A549 (cell line): ENCODE measurements at regions of chr10 and their contacts with region 1.

Region 1: GRCh38 chr10:103564776-103565520 is 71.4 kb downstream of the NEURL1 start:
- DNase-seq: peak; percentile 43 to 67
- ATAC-seq: peak; percentile 62 to 88; a peak in 5 of 6 replicates
- H3K4me3 ChIP-seq: no peak overlapping the region
- H3K27ac ChIP-seq: no peak overlapping the region
- H3K4me1 ChIP-seq: no peaks in the 10 kb centered on the region
- CTCF ChIP-seq: peak; percentile 56
- EP300 ChIP-seq: no peak
- POLR2A ChIP-seq: no peak
- RAD21 ChIP-seq: peak; percentile 32 to 64; a peak in 2 of 5 replicates

Region 2: DNA sequence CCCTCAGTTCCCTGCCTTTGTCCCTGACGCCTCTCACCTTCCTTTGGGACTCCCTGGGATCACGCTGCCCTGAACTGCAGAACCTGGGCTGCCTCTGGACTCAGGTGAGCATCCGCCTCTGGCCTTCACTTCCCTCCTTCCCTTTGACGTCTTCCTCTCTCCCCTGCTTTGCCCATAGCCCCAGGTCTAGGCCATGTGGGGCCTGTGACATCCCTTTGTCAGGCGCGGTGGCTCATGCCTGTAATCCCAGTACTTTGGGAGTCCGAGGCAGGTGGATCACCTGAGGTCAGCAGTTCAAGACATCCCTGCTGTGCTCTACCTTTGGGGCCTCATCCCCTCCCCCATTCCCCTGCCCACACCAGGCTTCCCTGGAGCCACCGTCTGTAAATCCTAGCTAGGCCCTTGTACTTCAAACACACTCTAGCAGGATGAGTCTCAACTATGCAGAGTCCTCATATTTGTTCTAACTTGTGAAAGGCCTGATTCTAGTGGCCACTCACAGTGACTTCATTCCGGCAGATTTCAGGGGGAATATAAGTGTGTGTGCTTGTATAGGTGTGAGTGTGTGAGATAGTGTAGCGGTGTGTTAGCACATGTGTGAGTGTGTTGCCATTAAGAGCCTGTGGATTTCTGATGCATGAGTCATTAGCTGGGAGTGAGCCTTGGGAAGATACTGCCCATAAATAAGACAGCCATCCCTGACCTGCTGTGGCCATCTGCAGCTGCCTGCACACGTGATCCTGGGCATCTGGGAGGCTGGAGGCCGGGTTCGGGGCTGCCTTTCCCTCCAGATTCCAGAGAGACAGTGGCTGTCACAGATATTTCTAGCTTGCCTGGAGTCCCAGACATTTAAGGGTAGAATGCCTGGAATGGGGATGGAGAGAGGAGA is 73.2 kb before region 1 on chr10:
- CTCF ChIA-PET with region 1: interaction called, 17 read pairs
- POLR2A ChIA-PET with region 1: no interaction called
- DNase-seq: peak; percentile 68 to 77
- ATAC-seq: peak; percentile 69 to 74
- H3K4me3 ChIP-seq: no peak overlapping the region
- H3K27ac ChIP-seq: no peak overlapping the region
- H3K4me1 ChIP-seq: peaks cover 13% of the 10 kb centered on the region
- CTCF ChIP-seq: no peak
- EP300 ChIP-seq: no peak
- POLR2A ChIP-seq: no peak
- RAD21 ChIP-seq: no peak

Region 3: GRCh38 chr10:103542764-103543616 is 22.0 kb before region 1 on chr10:
- CTCF ChIA-PET with region 1: interaction called, 34 read pairs
- POLR2A ChIA-PET with region 1: no interaction called
- DNase-seq: peak in 1 of 2 experiments; percentile 48
- ATAC-seq: peak; percentile 51 to 78; a peak in 4 of 6 replicates
- H3K4me3 ChIP-seq: no peak overlapping the region
- H3K27ac ChIP-seq: no peak overlapping the region
- H3K4me1 ChIP-seq: 0 out of 3 replicates have a peak, but pooled peaks cover 4% of the 10 kb centered on the region
- CTCF ChIP-seq: peak; percentile 39; the same call in 2 of the 3 replicates
- EP300 ChIP-seq: no peak
- POLR2A ChIP-seq: no peak
- RAD21 ChIP-seq: peak; percentile 12 to 42; a peak in 2 of 5 replicates

Region 4: DNA sequence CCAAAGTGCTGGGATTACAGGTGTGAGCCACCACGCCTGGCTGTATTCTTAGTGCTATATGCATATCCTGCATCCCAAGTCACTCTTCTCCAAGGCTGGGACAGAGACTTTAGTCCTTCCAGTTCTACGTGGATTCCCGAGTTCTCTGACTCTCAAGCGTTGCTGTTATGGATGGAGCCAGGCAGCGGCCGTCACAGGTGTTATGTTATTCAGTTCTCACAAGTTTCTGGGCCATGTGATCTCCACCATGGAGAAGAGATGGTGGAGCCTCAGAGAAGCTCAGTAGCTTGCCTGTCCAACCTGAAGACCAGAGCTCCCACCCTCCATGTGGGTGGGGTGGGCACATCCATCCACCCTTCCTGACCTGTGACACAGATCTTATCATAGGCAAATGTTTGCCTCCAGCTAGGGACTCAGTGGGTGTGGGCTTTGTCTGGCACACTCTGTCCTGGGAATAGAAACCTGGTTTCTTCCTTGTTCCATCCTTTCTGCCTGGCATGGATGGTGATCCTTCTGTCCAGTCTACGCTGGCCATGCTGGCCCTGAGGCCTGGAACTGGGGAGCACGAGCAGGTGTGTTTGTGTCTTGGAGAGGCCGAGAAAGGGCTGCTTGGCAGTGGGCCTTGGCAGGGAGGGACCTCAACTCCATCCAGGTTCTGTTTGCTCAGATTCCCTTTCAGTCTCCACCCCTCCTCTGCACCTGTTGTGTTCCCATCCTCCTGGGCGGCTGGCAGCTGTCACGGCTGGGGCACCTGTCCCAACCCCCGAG is 16.2 kb before region 1 on chr10:
- CTCF ChIA-PET with region 1: interaction called, 34 read pairs
- POLR2A ChIA-PET with region 1: no interaction called
- DNase-seq: no peak
- ATAC-seq: no peak
- H3K4me3 ChIP-seq: no peak overlapping the region
- H3K27ac ChIP-seq: no peak overlapping the region
- H3K4me1 ChIP-seq: no peaks in the 10 kb centered on the region
- CTCF ChIP-seq: no peak
- EP300 ChIP-seq: no peak
- POLR2A ChIP-seq: no peak
- RAD21 ChIP-seq: no peak

Region 5: DNA sequence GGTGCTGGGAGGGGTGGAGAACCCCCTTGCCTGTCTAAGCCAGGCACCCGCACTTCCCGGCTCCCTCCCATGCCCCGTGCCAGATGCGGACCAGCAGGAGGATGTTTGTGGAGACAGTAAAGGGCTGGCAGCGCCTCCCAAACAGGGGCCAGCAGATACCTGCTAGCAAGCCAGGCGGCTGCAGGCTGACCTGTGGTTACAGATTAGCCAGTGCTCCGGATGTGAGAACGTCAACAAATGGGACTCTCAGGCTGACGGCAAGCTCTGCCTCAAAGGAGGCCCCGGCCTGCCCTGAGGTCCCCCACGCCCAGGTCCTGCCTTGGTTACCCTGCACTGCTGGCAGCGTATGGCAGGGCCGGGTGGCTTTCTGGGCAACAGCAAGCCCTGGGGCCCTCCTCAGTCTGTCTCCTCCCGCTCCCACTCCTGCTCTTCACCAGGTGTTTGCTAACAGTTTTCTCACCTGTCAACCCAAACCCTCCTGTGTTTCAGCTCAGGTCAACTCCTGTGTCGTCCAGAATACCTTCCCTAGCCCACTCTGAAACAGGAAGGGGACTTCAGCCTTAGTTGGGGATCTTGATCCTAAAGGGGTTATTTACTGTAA is 13.9 kb after region 1 on chr10:
- CTCF ChIA-PET with region 1: interaction called, 32 read pairs
- POLR2A ChIA-PET with region 1: no interaction called
- DNase-seq: peak; percentile 33 to 39
- ATAC-seq: peak; percentile 37 to 50; a peak in 3 of 6 replicates
- H3K4me3 ChIP-seq: no peak overlapping the region
- H3K27ac ChIP-seq: peak overlapping the region in 1 of 2 experiments; percentile 52; a peak in 3 of 6 replicates
- H3K4me1 ChIP-seq: peaks cover 30% of the 10 kb centered on the region
- CTCF ChIP-seq: no peak
- EP300 ChIP-seq: no peak
- POLR2A ChIP-seq: no peak
- RAD21 ChIP-seq: no peak

Region 6: GRCh38 chr10:103584216-103585010 is 19.5 kb after region 1 on chr10:
- CTCF ChIA-PET with region 1: interaction called, 32 read pairs
- POLR2A ChIA-PET with region 1: no interaction called
- DNase-seq: no peak
- ATAC-seq: no peak
- H3K4me3 ChIP-seq: no peak overlapping the region
- H3K27ac ChIP-seq: no peak overlapping the region
- H3K4me1 ChIP-seq: no peaks in the 10 kb centered on the region
- CTCF ChIP-seq: no peak
- EP300 ChIP-seq: no peak
- POLR2A ChIP-seq: no peak
- RAD21 ChIP-seq: no peak

Region 7: DNA sequence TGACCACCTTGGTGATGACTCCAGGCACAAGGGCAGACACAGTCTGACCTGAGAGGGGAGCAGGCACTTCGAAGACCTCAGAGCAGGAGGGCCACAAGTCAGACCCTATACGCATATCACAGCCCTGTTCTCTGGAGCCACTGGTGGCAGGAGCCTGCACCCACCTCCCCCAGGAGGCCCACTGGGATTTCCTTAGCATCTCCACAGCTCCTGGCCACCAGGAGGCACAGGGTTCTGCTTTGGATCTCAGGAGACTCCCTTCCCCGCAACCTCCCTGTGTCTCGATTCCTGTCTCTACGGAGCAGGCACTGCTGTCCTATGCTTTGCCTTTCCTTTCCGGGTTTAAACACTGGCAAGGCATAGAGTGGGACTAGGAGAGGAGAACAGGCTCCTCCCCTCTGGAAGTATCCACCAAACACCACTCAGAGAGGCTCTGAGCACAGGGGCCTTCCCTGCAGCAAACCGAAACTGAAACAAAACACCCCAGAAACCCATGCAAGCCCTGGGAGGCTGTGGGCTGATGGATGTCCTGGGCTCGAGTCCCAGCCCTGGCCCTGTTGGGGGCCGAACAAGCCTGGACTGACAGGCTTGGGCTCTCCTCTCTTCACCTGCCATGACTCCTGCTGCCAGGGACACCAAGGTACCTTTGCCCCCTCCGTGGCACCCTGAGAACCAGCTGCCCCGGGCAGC is 94.9 kb after region 1 on chr10:
- CTCF ChIA-PET with region 1: no interaction called
- POLR2A ChIA-PET with region 1: no interaction called
- DNase-seq: no peak
- ATAC-seq: peak; percentile 25 to 30; a peak in 3 of 6 replicates
- H3K4me3 ChIP-seq: no peak overlapping the region
- H3K27ac ChIP-seq: no peak overlapping the region
- H3K4me1 ChIP-seq: no peaks in the 10 kb centered on the region
- CTCF ChIP-seq: no peak
- EP300 ChIP-seq: no peak
- POLR2A ChIP-seq: no peak
- RAD21 ChIP-seq: no peak

Region 8: DNA sequence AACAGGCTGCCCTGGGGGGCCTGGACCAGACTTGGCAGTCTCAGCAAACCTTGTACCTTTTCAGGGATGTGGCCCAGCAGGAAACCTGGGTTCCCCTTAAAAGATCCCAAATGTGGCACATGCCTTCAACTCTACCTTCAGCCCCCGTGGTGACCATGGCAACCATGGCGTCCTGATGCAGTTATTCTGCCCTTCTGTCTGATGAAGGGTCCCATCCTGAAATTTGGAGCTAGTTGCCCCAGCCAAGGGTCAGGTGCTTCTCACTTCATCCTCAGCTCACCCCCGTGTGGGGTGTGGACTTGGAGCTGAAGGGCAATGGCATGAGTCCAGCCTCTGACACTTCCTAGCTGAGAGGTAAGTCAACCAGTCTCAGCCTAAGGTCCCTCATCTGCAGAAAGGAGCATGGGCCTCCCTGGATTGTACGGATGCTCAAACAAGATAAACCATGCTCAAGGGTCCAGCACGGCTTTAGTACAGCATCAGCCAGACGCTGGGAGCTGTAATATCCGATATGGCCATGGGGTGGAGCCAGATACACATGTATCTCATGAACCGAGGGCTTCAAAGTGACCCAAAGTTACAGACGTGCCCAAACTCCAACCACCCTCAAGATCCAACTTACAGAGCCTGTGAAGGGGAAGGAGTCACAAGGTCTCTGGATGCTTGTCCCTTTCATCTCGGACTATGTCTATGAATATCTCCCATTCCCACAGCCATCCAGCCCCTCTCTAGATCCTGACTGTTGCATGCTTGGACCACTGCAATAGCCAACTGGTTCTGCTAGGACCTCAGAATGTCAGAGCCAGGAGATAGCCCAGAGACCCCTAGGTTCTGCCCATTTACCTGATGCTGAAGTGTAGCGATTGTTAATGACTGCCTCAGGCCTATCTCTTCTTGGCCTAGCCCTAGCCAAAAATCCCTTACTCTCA is 147.9 kb after region 1 on chr10:
- CTCF ChIA-PET with region 1: no interaction called
- POLR2A ChIA-PET with region 1: no interaction called
- DNase-seq: peak; percentile 71 to 74
- ATAC-seq: peak; percentile 79 to 90
- H3K4me3 ChIP-seq: no peak overlapping the region
- H3K27ac ChIP-seq: peak overlapping the region in 1 of 2 experiments; percentile 35; a peak in 2 of 6 replicates
- H3K4me1 ChIP-seq: peaks cover 19% of the 10 kb centered on the region; the same call in 2 of the 3 replicates
- CTCF ChIP-seq: peak; percentile 94
- EP300 ChIP-seq: no peak
- POLR2A ChIP-seq: no peak
- RAD21 ChIP-seq: peak; percentile 98